WTC11 (cell line): ENCODE measurements at regions of chr20 and their contacts with region 1.

Region 1: DNA sequence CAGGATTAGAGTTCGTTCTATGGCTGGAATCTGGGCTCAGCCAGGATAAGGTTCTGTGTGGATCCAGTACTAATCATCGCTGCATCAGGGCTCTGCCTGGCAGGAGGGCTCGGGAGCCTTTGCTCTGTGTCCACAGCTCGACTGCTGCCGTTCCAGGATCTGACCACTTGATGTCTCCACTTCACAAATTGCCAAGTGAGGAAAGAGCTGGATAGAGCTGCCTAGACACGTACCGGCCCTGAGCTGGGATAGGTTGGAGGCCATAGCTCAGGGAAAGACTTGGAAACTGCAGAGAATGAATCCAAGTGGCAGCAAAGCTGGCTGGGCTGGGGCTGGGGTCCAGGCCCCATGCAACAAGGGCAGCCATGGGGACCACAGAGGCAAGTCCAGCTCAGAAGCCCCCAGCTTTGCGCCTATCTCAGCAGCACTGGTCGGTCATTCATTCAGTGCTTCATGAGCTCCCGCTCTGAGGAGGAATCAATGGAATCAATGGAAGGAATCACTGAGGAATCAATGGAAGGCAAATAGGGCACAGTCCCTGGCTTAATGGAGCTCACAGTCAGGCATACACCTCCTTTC is 38.0 kb upstream of the TOP1 start:
- DNase-seq: peak; percentile 84
- ATAC-seq: peak; percentile 100
- H3K4me3 Mint-ChIP-seq: no peak overlapping the region
- H3K27ac Mint-ChIP-seq: peak overlapping the region; percentile 48; the same call in 1 of the 2 replicates
- H3K4me1 Mint-ChIP-seq: peaks cover 13% of the 10 kb centered on the region
- H3K27me3 Mint-ChIP-seq: peaks cover 11% of the 10 kb centered on the region
- CTCF ChIP-seq: 0 out of 2 replicates have a peak, but pooled peaks have one; percentile 5

Region 2: DNA sequence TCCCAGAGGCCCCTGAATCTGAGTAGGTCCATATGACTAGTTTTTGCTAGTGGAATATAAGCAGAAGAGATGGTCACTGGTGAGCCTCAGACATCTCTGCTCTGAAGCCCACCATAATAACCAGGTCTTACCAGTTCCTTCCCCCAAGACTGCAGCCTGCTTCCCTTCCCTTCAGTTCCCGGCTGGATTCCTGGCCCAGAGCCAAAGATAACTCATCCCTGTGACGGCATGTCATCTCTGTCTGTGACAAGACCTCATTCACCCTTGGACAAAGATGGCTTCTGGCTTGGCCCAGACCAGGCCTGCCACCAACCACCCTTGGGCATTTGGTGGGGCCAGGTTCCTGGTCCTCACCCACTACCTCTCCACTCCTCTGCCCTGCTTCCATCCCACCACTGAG is 107.5 kb before region 1 on chr20:
- CTCF ChIA-PET with region 1: no interaction called
- POLR2A ChIA-PET with region 1: no interaction called
- DNase-seq: no peak
- ATAC-seq: no peak
- H3K4me3 Mint-ChIP-seq: no peak overlapping the region
- H3K27ac Mint-ChIP-seq: no peak overlapping the region
- H3K4me1 Mint-ChIP-seq: peaks cover 6% of the 10 kb centered on the region; the same call in 1 of the 2 replicates
- H3K27me3 Mint-ChIP-seq: no peaks in the 10 kb centered on the region; the same call in 1 of the 2 replicates
- CTCF ChIP-seq: no peak

Region 3: DNA sequence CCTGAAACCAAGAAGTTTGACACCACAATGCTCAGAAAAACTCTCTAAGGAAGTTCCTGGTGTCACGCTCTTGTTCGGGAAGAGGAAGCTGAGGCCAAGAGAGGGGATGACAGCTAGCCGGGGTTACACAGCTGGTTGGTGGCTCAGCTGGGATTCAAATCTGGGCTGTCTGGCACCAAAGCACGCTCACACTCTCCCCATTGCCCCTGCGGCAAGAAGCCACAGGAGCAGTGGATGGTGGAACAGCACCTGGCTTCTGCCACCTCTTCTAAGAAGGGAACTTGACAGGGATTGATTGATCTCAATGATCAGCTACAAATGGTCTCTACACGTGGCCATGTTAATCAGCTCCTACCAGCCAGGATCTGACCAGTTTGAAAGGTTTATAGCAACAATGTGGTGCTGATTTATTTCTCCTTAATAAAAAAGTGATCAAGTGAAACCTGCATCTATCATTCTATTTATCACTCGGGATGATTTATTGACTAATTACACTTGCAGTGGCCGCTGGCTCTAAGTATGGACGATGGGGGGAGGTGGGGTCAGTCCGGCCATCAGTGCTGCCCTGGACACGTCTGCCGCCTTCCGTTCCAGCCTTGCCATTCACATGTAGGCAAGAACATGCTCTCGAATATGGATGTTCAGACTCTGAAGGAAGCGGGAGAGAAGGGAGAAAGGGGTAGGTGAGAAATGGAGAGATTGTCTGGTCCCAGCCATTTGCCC is 33.9 kb before region 1 on chr20:
- CTCF ChIA-PET with region 1: no interaction called
- POLR2A ChIA-PET with region 1: no interaction called
- DNase-seq: no peak
- ATAC-seq: no peak
- H3K4me3 Mint-ChIP-seq: no peak overlapping the region
- H3K27ac Mint-ChIP-seq: no peak overlapping the region
- H3K4me1 Mint-ChIP-seq: peaks cover 5% of the 10 kb centered on the region
- H3K27me3 Mint-ChIP-seq: no peaks in the 10 kb centered on the region
- CTCF ChIP-seq: no peak

Region 4: GRCh38 chr20:40970201-40970600 is 20.4 kb before region 1 on chr20:
- CTCF ChIA-PET with region 1: interaction called, 25 read pairs
- POLR2A ChIA-PET with region 1: no interaction called
- DNase-seq: no peak
- ATAC-seq: peak; percentile 36
- H3K4me3 Mint-ChIP-seq: no peak overlapping the region
- H3K27ac Mint-ChIP-seq: no peak overlapping the region
- H3K4me1 Mint-ChIP-seq: peaks cover 19% of the 10 kb centered on the region
- H3K27me3 Mint-ChIP-seq: peaks cover 12% of the 10 kb centered on the region
- CTCF ChIP-seq: no peak

Region 5: DNA sequence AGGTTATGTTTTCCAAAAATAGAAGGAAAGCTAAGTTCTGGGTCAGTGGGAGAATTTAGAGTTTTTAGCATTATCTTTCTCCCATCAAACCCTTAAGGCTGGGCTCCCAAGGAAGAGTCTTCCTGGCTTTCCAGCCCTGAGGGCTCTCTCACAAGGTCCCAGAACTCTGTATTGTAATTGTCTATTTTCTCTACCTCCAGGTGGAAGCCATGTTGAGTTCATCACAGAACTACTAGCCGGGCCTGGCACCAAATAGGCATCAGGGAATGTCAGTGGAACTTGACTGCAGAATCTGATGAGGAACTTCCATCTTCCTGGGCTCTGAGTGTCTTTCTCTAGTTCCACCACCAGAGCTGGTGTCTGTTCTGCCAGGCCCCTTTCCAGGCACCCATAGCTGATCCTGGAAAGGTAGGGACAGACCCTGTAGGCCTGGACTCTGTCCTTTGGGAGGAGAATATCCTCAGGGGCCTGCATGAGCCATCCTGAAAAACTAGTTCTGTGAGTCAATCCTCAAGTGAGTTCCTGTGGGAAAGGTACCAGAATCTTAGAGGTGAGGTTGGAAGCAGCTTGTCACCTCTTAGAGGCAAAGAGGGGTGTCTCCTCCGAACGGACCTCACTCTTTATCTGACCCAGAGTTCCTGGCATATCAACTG is 26.9 kb after region 1 on chr20:
- CTCF ChIA-PET with region 1: interaction called, 13 read pairs
- POLR2A ChIA-PET with region 1: interaction called, 3 read pairs
- DNase-seq: no peak
- ATAC-seq: 0 out of 2 replicates have a peak, but pooled peaks have one; percentile 44
- H3K4me3 Mint-ChIP-seq: no peak overlapping the region
- H3K27ac Mint-ChIP-seq: no peak overlapping the region
- H3K4me1 Mint-ChIP-seq: peaks cover 9% of the 10 kb centered on the region
- H3K27me3 Mint-ChIP-seq: peaks cover 19% of the 10 kb centered on the region
- CTCF ChIP-seq: no peak

Region 6: GRCh38 chr20:41047975-41048305 is 57.3 kb after region 1 on chr20:
- CTCF ChIA-PET with region 1: interaction called, 46 read pairs
- POLR2A ChIA-PET with region 1: interaction called, 3 read pairs
- DNase-seq: no peak
- ATAC-seq: no peak
- H3K4me3 Mint-ChIP-seq: peak overlapping the region; percentile 56
- H3K27ac Mint-ChIP-seq: no peak overlapping the region
- H3K4me1 Mint-ChIP-seq: peaks cover 88% of the 10 kb centered on the region
- H3K27me3 Mint-ChIP-seq: no peaks in the 10 kb centered on the region; the same call in 1 of the 2 replicates
- CTCF ChIP-seq: no peak

Region 7: DNA sequence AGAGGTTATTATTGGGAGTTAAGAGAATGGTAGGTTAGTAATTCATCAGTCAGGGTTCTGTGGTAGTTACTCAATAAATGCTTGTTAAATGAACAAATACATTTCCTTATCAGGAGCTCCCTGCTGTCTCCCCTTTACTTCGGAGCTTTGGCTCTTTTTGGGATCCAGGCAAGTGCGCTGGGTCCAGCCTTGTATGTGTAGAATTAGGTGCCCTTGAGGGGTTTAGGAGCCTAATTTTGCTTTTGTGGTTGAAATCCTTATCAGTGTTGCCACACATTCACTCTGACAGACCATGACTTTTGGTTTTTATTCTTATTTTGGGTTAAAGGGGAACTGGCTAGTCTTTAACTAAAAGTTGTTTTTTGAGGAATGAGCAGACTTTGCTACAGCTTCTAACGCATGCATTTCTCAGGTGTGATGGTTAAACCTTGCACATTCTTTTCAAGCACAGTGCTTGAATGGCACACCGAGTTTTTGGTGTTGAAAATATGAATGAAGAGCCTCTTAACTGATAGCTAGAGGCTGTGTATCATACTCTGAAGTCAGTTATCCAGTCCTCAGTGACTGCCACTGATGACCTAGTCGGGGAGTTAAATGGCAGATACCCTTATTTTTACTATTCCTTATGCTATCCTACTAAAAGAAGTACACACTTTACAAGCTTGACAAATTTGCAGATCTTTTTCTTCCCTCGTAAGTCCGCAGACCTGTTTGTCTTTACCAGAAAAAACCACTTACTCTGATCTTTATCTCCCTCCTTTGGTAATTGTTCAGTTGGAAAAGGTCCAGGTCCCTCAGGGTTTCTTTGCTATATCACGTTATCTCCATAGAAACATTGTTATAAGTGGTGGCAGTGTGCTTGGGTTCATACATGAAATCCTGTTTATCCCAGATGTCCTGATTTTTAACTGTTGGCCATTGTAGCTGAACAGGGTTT is 96.0 kb after region 1 on chr20:
- CTCF ChIA-PET with region 1: interaction called, 13 read pairs
- POLR2A ChIA-PET with region 1: no interaction called
- DNase-seq: no peak
- ATAC-seq: no peak
- H3K4me3 Mint-ChIP-seq: no peak overlapping the region
- H3K27ac Mint-ChIP-seq: no peak overlapping the region; the same call in none of the 2 replicates
- H3K4me1 Mint-ChIP-seq: peaks cover 10% of the 10 kb centered on the region
- H3K27me3 Mint-ChIP-seq: no peaks in the 10 kb centered on the region
- CTCF ChIP-seq: no peak

Region 8: DNA sequence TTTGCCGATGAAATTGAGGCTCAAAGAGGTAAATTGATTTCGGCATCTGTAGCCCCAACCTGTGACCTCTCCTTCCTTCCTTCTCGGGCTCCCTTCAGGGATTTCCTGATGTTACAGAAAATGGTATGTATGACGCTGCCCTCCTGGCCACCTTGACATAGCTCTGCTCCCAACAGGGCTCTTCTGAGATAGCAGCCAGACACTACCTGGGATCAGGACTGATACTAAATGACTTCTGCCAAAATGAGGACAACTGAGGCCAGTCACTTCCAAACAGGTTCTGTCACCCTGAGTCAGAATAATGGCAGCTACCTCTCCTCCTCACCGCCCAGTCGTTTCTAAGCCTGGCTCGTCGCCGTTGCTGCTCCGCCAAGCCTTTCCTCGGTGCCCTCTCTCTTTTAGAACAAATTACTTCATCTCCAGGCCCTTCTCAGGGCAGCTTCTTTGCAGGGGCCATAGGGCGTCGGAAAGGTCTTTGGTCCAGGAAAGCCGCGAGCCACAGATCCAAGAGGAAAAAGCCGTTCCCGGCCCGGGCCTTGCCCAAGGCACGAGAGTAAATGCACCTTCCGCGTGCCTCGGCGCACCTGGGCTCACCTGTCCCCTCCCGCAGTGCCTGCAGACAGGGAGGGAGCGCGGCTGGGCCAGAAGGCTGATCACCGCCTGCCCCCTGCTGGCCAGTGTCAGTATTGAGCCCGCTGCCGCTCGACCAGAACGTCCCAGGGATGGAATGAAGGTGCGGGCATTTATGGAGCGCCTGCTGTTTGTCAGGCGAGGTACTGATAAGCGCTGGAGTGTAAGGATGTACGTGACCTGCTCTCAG is 349.1 kb after region 1 on chr20:
- CTCF ChIA-PET with region 1: interaction called, 11 read pairs
- POLR2A ChIA-PET with region 1: no interaction called
- DNase-seq: peak; percentile 98
- ATAC-seq: peak; percentile 77
- H3K4me3 Mint-ChIP-seq: peak overlapping the region; percentile 80
- H3K27ac Mint-ChIP-seq: peak overlapping the region; percentile 92
- H3K4me1 Mint-ChIP-seq: peaks cover 6% of the 10 kb centered on the region
- H3K27me3 Mint-ChIP-seq: peaks cover 8% of the 10 kb centered on the region
- CTCF ChIP-seq: peak; percentile 99